HCT116 (cell line): ENCODE measurements at regions of chr1 and their contacts with region 1.

Region 1: GRCh38 chr1:107842241-107842640 is 122.7 kb downstream of the VAV3 start:
- DNase-seq: no peak
- ATAC-seq: no peak
- H3K4me3 ChIP-seq: no peak overlapping the region
- H3K27ac ChIP-seq: no peak overlapping the region
- H3K4me1 ChIP-seq: no peaks in the 10 kb centered on the region
- H3K27me3 ChIP-seq: 0 out of 2 replicates have a peak, but pooled peaks cover 2% of the 10 kb centered on the region
- CTCF ChIP-seq: no peak
- POLR2A ChIP-seq: no peak
- RAD21 ChIP-seq: no peak

Region 2: DNA sequence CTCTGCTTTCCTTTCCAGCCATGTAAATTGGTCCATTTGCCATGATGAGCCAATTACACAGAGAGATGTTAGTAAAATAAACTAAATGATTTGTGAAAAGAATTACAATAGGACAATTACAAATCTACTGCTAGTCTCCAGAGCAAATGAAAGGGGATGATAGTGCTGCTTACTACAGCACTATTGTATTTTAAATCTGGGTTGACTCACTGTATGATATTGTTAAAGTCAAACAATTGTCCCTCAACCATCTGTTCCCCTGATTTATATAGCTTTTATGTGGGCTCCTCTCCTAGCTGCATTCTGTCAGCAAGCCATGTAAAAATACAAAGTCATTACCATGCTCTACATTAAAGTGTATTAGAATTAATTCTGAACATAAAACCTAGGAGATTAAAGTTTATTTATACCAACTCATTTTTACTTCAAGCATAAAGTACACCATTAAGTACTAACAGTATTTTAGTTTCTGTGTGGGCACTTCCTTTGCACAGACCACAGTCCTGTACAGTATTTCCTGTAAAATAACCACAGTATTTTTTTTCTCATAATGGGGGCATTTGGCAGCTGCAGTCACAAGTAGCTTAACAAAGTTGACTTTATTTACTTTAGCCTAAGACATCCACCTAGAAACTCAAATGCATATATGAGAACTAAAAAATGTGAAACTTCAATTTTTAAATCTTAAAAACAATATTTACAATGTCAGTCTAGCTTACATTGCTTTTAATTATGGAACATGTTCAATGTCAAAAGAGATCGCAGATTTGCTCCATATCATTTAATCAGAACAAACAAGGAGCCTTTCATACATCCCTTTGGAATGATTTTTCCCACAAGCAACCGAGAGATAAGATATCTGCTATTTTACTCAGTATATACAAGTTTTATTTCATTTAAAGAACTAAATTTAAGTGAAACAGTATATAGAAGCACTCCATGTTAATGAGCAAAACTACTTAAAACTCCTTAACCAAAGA is 12.9 kb before region 1 on chr1:
- CTCF ChIA-PET with region 1: no interaction called
- POLR2A ChIA-PET with region 1: no interaction called
- RAD21 ChIA-PET with region 1: no interaction called
- intact Hi-C with region 1: loop called (anchors 2 kb)
- DNase-seq: no peak
- ATAC-seq: no peak
- H3K4me3 ChIP-seq: no peak overlapping the region
- H3K27ac ChIP-seq: no peak overlapping the region
- H3K4me1 ChIP-seq: no peaks in the 10 kb centered on the region
- H3K27me3 ChIP-seq: peaks cover 16% of the 10 kb centered on the region
- CTCF ChIP-seq: no peak
- POLR2A ChIP-seq: no peak
- RAD21 ChIP-seq: no peak